ENCODE measurements at regions of chr19 and their contacts with region 1.

Region 1: DNA sequence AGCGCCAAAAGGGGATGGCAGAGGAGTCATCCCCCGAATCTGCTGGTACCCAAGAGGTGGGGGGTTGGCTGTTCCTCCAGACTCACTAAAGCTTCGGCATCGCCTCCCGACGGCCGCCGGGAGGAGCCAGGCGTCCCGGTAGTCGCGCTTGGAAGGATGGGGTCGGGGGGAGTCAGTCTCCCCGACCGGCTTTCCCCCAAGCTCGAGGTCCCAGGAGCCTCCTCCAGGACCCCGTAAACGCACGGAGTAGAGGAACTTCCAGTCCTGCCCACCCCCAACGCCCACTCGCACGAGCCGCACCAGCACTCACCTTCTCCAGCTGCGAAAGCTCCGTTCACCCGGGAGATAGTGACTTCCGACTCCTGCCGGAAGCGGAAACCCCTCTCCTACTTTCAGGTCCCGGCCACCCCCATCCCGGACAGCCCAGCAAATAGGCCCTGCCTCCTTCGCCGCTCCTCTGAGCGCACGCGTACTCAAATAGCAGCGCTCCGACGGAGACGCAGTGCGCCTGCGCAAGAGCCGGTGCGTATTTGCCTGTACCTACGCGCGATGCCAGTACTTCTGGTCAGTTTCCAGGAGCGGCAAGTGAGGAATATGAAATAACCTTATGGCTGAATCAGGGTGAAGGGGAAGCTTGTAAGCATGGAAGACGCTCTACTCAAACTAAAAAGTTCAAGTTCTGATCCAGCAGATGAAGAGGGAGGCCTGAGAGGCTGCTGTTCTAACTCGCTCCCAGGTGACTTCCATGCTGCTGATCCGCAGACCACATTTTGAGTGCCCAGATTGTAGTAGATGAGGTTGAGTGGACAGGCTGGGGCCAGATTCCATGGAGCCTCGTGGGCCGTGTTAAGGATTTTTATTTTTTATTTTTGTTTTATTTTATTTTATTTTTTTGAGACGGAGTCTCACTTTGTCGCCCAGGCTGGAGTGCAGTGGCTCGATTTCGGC is at the start of gene ELOF1:
- DNase-seq: peak; percentile 99
- H3K4me3 Mint-ChIP-seq: peak within 1 kb of the TSS; percentile 94
- H3K27ac Mint-ChIP-seq: peak within 1 kb of the TSS; percentile 43
- H3K4me1 Mint-ChIP-seq: peaks cover 20% of the 10 kb centered on the region
- H3K27me3 Mint-ChIP-seq: no peaks in the 10 kb centered on the region
- CTCF ChIP-seq: peak; percentile 3
- total RNA-seq, gene ELOF1: 72.1 and 78.7 TPM in 2 replicates

Region 2: GRCh38 chr19:11355160-11356073 is 203.7 kb before region 1 on chr19 and contains the start of gene PLPPR2:
- CTCF ChIA-PET with region 1: no interaction called
- POLR2A ChIA-PET with region 1: no interaction called
- intact Hi-C with region 1: no loop called
- DNase-seq: peak; percentile 94
- H3K4me3 Mint-ChIP-seq: peak within 1 kb of the TSS; percentile 83
- H3K27ac Mint-ChIP-seq: peak within 1 kb of the TSS; percentile 52
- H3K4me1 Mint-ChIP-seq: peaks cover 26% of the 10 kb centered on the region
- H3K27me3 Mint-ChIP-seq: no peaks in the 10 kb centered on the region
- CTCF ChIP-seq: no peak
- total RNA-seq, gene PLPPR2: 19.5 and 24.2 TPM in 2 replicates

Region 3: DNA sequence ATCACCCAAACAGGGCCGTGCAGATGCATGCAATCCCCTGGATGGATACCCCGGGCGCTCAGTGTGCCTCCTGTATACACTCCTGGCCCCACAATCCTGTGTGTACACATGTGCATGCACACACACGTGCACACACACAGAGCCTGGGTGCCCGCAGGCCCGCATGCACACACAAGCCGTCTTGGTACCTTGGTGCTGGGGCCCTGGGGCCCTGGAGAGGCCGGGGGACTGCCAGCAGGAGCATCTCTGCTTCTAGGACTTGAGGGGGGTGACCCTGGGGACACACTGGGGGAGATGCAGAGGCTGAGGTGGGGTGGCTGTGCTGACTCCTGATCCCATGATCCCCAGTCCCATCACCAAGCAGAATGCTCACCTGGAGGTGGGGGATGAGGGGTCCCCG is 159.5 kb before region 1 on chr19:
- CTCF ChIA-PET with region 1: no interaction called
- POLR2A ChIA-PET with region 1: no interaction called
- intact Hi-C with region 1: no loop called
- DNase-seq: no peak
- H3K4me3 Mint-ChIP-seq: no peak overlapping the region
- H3K27ac Mint-ChIP-seq: no peak overlapping the region
- H3K4me1 Mint-ChIP-seq: no peaks in the 10 kb centered on the region
- H3K27me3 Mint-ChIP-seq: no peaks in the 10 kb centered on the region
- CTCF ChIP-seq: no peak

Region 4: DNA sequence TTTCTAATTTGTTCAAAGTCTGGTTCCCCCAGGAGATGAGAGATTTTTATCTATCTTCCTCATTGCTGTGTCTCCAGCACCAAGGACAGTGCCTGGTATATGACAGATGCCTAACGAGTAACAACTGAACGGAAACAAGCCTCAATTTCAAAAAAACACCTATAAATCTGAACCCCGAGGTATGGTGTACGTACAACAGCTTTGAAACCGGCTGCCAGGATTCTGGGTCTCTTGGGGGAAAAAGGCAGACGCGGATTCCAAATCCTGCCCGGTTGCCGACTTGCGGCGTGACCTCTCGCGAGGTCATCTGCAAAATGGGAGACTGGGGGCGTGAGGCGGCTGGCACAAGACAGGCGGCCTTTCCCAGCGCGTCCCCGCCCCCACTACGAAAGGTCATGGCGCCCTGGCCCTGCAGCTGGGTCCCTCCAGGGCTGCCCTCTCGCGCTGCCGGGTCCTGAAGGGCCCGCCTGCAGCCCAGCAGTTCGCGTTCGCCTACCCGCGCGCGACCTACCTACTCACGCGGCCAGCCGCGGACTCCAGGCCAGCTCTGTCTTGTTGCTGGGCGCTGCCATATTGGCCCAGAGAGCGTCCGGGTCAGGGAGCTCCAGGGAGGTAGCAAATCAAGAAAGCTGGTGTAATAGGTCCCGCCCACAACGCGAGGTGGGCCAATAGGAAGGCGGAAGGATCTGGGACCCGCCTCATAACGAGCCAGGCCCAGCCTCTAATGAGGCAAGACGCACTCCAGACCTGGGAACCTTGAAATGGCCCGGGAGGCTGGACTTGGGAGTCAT is 30.4 kb before region 1 on chr19 and contains the start of gene ECSIT:
- CTCF ChIA-PET with region 1: interaction called, 3 read pairs
- POLR2A ChIA-PET with region 1: interaction called, 15 read pairs
- intact Hi-C with region 1: no loop called
- DNase-seq: peak; percentile 100
- H3K4me3 Mint-ChIP-seq: peak within 1 kb of the TSS; percentile 93
- H3K27ac Mint-ChIP-seq: peak within 1 kb of the TSS; percentile 90
- H3K4me1 Mint-ChIP-seq: peaks cover 8% of the 10 kb centered on the region
- H3K27me3 Mint-ChIP-seq: no peaks in the 10 kb centered on the region
- CTCF ChIP-seq: no peak
- total RNA-seq, gene ECSIT: 19.2 and 26.8 TPM in 2 replicates

Region 5: GRCh38 chr19:11535792-11536595 is 23.2 kb before region 1 on chr19:
- CTCF ChIA-PET with region 1: interaction called, 12 read pairs
- POLR2A ChIA-PET with region 1: interaction called, 9 read pairs
- intact Hi-C with region 1: loop called (anchors 2 kb)
- DNase-seq: peak; percentile 86
- H3K4me3 Mint-ChIP-seq: peak overlapping the region; percentile 18
- H3K27ac Mint-ChIP-seq: peak overlapping the region; percentile 79
- H3K4me1 Mint-ChIP-seq: peaks cover 11% of the 10 kb centered on the region
- H3K27me3 Mint-ChIP-seq: no peaks in the 10 kb centered on the region
- CTCF ChIP-seq: peak; percentile 85

Region 6: GRCh38 chr19:11587302-11587974 is 28.3 kb after region 1 on chr19:
- CTCF ChIA-PET with region 1: interaction called, 9 read pairs
- POLR2A ChIA-PET with region 1: interaction called, 5 read pairs
- intact Hi-C with region 1: loop called (anchors 1 kb)
- DNase-seq: peak; percentile 65
- H3K4me3 Mint-ChIP-seq: no peak overlapping the region
- H3K27ac Mint-ChIP-seq: no peak overlapping the region
- H3K4me1 Mint-ChIP-seq: peaks cover 13% of the 10 kb centered on the region
- H3K27me3 Mint-ChIP-seq: no peaks in the 10 kb centered on the region
- CTCF ChIP-seq: peak; percentile 94

Region 7: GRCh38 chr19:11597202-11598102 is 38.3 kb after region 1 on chr19 and contains the start of gene ZNF627:
- CTCF ChIA-PET with region 1: interaction called, 6 read pairs
- POLR2A ChIA-PET with region 1: interaction called, 11 read pairs
- intact Hi-C with region 1: no loop called
- DNase-seq: peak; percentile 99
- H3K4me3 Mint-ChIP-seq: peak within 1 kb of the TSS; percentile 82
- H3K27ac Mint-ChIP-seq: peak within 1 kb of the TSS; percentile 92
- H3K4me1 Mint-ChIP-seq: peaks cover 7% of the 10 kb centered on the region
- H3K27me3 Mint-ChIP-seq: no peaks in the 10 kb centered on the region
- CTCF ChIP-seq: peak; percentile 5
- total RNA-seq, gene ZNF627: 8.7 and 10.9 TPM in 2 replicates

Region 8: GRCh38 chr19:12112701-12113100 is 553.5 kb after region 1 on chr19:
- CTCF ChIA-PET with region 1: no interaction called
- POLR2A ChIA-PET with region 1: no interaction called
- intact Hi-C with region 1: no loop called
- DNase-seq: no peak
- H3K4me3 Mint-ChIP-seq: no peak overlapping the region
- H3K27ac Mint-ChIP-seq: no peak overlapping the region
- H3K4me1 Mint-ChIP-seq: no peaks in the 10 kb centered on the region
- H3K27me3 Mint-ChIP-seq: no peaks in the 10 kb centered on the region
- CTCF ChIP-seq: no peak